Activated naive CD4-positive, alpha-beta T cell treated with anti-CD3 and anti-CD28 coated beads for 36 hours (primary cell): ENCODE measurements at regions of chr3 and their contacts with region 1.

Region 1: DNA sequence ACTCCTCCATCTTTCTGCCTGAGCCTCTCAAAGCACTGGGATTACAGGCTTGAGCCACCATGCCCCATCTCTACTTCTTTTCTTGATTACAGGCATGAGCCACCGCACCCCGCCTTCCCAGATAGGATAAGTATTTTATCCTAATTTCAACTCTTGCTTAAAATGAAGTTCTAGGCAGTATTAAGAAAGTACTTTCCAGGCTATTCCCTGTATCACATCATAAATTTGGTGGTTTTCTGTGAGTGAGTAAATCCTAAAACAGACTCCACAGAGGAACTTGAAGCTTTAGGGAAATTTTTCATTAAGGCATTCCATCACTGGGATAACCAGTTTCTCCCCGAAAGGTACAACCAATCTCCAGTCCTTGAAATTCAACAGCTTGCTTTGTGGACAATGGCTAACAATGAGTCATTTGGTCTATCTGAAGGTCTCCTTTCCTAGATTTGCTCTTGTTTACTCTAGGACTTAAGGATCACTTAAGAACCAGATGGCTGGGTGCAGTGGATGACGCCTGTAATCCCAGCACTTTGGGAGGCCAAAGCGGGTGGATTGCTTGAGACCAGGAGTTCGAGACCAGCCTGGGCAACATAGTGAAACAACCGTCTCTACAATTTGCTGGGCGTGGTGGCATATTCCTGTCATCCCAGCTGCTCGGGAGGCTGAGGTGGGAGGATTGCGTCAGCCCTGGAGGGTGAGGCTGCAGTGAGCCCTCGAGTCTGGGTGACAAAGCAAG is 49.7 kb upstream of the SKIL start:
- DNase-seq: no peak
- H3K4me3 Mint-ChIP-seq: no peak overlapping the region
- H3K27ac Mint-ChIP-seq: no peak overlapping the region
- H3K4me1 Mint-ChIP-seq: no peaks in the 10 kb centered on the region
- H3K27me3 Mint-ChIP-seq: no peaks in the 10 kb centered on the region

Region 2: DNA sequence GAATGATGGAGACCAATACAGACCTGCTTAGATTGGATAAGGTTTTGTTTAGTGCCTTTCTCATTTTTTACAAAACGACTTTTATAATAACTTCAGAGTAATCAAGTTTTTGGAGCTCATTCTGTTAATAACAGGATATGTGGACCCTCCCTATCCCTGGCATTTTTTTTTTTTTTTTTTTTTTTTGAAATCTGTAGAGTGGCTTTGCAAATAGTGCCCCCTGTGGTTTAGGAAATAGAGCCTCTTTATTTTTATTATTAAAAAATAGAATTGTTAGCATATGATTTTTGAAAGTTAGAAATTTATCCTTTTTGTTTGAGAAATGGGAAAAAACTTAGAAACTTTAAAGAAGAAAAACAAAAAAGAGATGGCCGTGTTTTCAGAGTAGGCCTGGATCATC is 61.1 kb after region 1 on chr3:
- CTCF ChIA-PET with region 1: no interaction called
- intact Hi-C with region 1: loop called (anchors 1 kb)
- DNase-seq: no peak
- H3K4me3 Mint-ChIP-seq: no peak overlapping the region
- H3K27ac Mint-ChIP-seq: no peak overlapping the region
- H3K4me1 Mint-ChIP-seq: peaks cover 26% of the 10 kb centered on the region
- H3K27me3 Mint-ChIP-seq: no peaks in the 10 kb centered on the region

Region 3: GRCh38 chr3:170499565-170500156 is 191.8 kb after region 1 on chr3:
- CTCF ChIA-PET with region 1: no interaction called
- intact Hi-C with region 1: loop called (anchors 2 kb)
- DNase-seq: peak; percentile 39
- H3K4me3 Mint-ChIP-seq: no peak overlapping the region
- H3K27ac Mint-ChIP-seq: no peak overlapping the region
- H3K4me1 Mint-ChIP-seq: no peaks in the 10 kb centered on the region
- H3K27me3 Mint-ChIP-seq: peaks cover 3% of the 10 kb centered on the region